Esophagus squamous epithelium (tissue), 5 donors: ENCODE measurements at regions of chr16 and their contacts with region 1.

Region 1: DNA sequence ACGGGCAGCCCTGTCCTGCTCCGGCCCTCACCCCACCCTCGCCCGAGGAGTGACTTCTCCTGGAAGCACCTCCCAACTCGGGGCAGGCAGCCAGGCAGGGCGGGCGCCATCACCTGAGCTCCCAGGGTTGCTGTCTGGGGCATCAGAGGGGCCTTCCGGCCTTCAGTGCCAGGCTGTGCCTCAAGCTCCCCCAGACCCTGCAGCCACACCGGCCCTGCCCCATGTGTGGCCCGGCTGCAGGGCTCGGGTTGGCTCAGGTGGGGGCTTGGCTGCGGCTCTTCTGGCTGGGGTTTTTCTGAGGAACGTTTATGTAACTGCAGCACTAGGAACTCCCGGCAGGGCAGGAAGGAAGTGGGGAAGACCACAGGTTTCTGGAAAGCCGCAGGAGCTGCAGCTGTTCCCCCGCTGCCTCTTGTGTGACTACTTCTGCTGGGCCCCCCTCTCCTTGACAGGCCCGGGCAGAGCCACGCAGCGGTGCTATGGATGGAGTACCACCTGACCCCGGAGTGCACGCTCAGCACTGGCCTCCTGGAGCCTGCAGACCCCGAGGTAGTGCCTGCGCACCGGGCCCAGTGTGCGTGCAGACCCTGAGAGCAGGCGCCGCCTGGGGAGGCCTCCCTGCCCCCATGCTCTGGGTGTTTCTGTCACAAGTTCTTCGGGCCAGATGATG is 45.6 kb downstream of the PRMT7 start:
- DNase-seq: no peak
- H3K4me3 ChIP-seq: peak overlapping the region in 1 of 4 donors; percentile 32
- H3K27ac ChIP-seq: no peak overlapping the region
- H3K4me1 ChIP-seq: peaks cover 0 to 43% (median 0%) of the 10 kb centered on the region in 3 donors
- H3K27me3 ChIP-seq: no peaks in the 10 kb centered on the region
- CTCF ChIP-seq: no peak
- POLR2A ChIP-seq: no peak

Region 2: DNA sequence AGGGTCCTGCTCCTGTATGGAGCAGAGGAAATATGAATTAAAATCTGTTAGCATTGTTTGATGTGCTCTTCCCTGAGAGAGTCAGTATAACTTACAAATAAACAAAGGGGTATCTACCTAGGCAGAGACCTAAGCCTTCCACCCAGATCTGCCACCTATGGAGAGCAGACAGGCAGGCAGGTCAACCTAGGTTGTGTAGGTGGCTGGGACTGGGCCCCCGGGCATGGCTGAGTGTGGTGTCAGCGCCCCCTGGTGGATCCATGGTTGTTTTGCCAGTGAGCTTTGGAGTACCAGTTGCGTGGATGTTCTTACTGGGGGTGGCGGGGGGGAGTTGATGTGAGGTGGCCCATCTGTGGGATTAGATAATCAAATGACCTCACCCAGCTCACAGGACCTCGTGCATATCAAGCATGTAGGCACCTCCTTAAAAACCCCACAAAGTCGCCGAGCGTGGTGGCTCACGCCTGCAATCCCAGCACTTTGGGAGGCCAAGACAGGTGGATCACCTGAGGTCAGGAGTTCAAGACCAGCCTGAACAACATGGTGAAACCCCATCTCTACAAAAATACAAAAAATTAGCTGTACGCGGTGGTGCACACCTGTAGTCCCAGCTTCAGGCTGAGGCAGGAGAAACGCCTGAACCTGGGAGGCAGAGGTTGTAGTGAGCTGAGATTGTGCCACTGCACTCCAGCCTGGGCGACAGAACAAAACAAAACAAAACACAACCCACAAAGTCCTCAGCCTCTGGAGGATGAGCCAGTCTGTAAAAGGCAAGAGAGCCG is 315.7 kb before region 1 on chr16:
- intact Hi-C with region 1: no loop called
- DNase-seq: peak; percentile 59
- H3K4me3 ChIP-seq: no peak overlapping the region
- H3K27ac ChIP-seq: peak overlapping the region; percentile 2 to 35 (median 26)
- H3K4me1 ChIP-seq: peaks cover 0 to 6% (median 0%) of the 10 kb centered on the region in 3 donors
- H3K27me3 ChIP-seq: no peaks in the 10 kb centered on the region
- CTCF ChIP-seq: peak; percentile 80 to 94 (median 89)
- POLR2A ChIP-seq: no peak

Region 3: DNA sequence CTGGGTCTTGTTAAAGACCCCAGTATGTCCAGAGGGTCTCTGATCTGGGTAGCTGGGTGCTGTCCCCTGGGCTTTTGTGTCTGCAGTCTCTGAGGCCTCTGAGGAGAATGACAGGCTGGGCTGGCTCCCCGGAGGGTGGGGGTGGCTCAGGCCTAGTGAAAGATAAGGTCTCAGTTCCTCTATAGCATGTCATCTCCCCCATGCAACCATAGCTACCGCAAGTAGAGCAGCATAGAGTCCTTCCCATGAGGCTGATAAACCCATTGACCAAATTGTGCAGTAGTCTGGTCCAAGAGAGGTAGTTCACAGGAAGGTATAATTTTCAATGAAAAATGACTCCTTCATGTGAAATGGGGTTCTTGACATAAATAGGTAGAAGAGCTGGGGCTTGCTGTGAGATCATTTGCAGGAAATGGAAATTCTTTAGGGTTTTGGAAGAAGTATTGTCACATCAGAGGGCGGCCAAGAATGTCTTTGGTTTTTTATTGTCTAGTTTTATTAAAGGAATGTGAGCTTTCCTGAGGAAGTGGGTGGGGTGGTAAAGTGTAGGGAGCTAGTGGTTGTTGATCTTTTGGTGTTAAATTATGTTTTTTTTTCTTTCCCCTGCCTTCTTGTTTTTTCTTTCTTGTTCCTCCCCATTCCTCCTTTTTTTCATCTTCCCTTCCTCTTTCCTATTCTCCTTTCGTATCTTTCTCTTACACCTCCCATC is 66.6 kb before region 1 on chr16:
- intact Hi-C with region 1: loop called (anchors 10 kb)
- DNase-seq: no peak
- H3K4me3 ChIP-seq: no peak overlapping the region
- H3K27ac ChIP-seq: peak overlapping the region in 3 of 4 donors; percentile 38 to 73 (median 39)
- H3K4me1 ChIP-seq: peaks cover 9 to 57% (median 40%) of the 10 kb centered on the region in 3 donors
- H3K27me3 ChIP-seq: no peaks in the 10 kb centered on the region
- CTCF ChIP-seq: no peak
- POLR2A ChIP-seq: no peak